Stomach (tissue), 19 donors: ENCODE measurements at regions of chr2 and their contacts with region 1.

Region 1: DNA sequence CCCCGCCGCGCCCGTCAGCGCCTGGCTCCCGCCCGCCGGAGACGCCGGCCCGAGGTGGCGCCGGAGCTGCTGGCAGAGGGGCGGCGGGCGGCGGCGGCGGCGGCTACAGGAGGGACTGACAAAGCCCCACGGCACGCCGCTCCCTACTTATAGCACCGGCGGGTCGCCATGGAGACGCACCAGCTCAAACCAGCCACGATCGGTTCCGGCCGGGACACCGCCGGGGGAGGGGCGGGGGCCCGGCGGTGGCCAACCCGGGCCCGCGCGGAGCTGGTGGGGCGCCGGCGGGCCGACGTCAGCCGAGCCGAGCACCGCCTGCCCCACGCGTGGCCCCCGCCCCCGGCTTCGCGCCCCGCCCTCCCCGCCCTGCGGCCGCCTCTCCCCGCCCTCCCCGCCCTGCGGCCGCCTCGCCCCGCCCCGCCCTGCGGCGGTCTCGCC is at the start of gene ODC1:
- DNase-seq: peak; percentile 97 to 98
- H3K4me3 ChIP-seq: peak within 1 kb of the TSS; percentile 65 to 70 (median 68)
- H3K27ac ChIP-seq: peak within 1 kb of the TSS; percentile 92 to 99 (median 98)
- H3K4me1 ChIP-seq: peaks cover 32 to 77% (median 56%) of the 10 kb centered on the region in 4 donors
- H3K27me3 ChIP-seq: no peaks in the 10 kb centered on the region
- CTCF ChIP-seq: no peak
- EP300 ChIP-seq: no peak
- POLR2A ChIP-seq: no peak
- total RNA-seq, gene ODC1: 33.0 to 148 (median 113) TPM

Region 2: DNA sequence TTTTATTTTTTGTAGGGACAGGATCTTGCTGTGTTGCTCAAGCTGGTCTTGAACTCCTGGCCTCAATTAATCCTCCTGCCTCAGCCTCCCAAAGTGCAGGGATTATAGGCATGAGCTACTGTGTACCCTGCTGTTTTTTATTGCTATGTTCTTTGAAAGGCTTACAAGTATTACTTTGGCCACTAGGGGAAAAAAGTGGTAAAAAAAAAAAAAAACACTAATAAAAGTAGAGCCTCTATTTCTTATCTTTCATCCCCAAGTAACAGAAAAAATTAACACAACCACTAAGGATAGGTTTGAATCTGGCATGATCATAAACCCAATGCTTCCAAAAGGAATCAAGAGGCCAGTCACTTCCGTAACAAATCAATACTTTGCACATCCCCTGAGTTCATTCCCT is 230.0 kb after region 1 on chr2:
- intact Hi-C with region 1: loop called (anchors 10 kb)
- DNase-seq: no peak
- H3K4me3 ChIP-seq: no peak overlapping the region
- H3K27ac ChIP-seq: no peak overlapping the region
- H3K4me1 ChIP-seq: peaks cover 0 to 17% (median 0%) of the 10 kb centered on the region in 4 donors
- H3K27me3 ChIP-seq: no peaks in the 10 kb centered on the region
- CTCF ChIP-seq: peak in 1 of 7 experiments; percentile 49
- EP300 ChIP-seq: no peak
- POLR2A ChIP-seq: no peak